CD4-positive, alpha-beta T cell (primary cell): ENCODE measurements at regions of chr16 and their contacts with region 1.

Region 1: DNA sequence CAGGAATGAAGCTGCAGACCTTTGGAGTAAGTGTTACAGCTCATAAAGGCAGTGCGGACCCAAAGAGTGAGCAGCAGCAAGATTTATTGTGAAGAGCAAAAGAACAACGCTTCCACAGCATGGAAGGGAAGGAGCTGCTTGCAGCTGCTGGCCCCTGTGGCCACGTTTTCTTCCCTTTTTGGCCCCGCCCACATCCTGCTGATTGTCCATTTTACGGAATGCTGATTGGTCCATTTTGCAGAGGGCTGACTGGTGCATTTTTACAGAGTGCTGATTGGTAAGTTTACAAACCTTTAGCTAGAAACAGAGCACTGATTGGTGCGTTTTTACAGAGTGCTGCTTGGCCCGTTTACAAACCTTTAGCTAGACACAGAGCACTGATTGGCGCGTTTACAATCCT is 841.5 kb downstream of the CDH11 start:
- DNase-seq: no peak
- ATAC-seq: no peak
- H3K4me3 ChIP-seq: no peak overlapping the region
- H3K4me3 Mint-ChIP-seq: no peak overlapping the region
- H3K27ac ChIP-seq: no peak overlapping the region
- H3K27ac Mint-ChIP-seq: no peak overlapping the region
- H3K4me1 ChIP-seq: no peaks in the 10 kb centered on the region
- H3K4me1 Mint-ChIP-seq: no peaks in the 10 kb centered on the region
- H3K27me3 ChIP-seq: no peaks in the 10 kb centered on the region
- H3K27me3 Mint-ChIP-seq: no peaks in the 10 kb centered on the region
- CTCF ChIP-seq: no peak

Region 2: DNA sequence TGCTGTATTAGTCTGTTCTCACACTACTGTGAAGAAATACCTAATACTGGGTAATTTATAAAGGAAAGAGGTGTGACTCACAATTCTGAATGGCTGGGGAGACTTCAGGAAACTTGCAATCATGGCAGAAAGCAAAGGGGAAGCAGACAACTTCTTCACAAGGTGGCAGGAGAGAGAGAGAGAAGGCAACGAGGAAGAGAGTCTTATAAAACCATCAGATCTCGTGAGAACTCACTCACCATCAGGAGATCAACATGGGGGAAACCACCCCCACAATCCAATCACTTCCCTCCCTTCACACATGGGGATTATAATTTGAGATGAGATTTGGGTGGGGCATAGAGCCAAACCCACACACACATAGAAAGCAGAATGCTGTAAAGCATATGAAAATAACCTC is 54.6 kb before region 1 on chr16:
- CTCF ChIA-PET with region 1: no interaction called
- POLR2A ChIA-PET with region 1: no interaction called
- intact Hi-C with region 1: loop called in 1 of 2 experiments (anchors 10 kb)
- DNase-seq: no peak
- ATAC-seq: no peak
- H3K4me3 ChIP-seq: no peak overlapping the region
- H3K4me3 Mint-ChIP-seq: no peak overlapping the region
- H3K27ac ChIP-seq: no peak overlapping the region
- H3K27ac Mint-ChIP-seq: no peak overlapping the region
- H3K4me1 ChIP-seq: no peaks in the 10 kb centered on the region
- H3K4me1 Mint-ChIP-seq: no peaks in the 10 kb centered on the region
- H3K27me3 ChIP-seq: no peaks in the 10 kb centered on the region
- H3K27me3 Mint-ChIP-seq: no peaks in the 10 kb centered on the region
- CTCF ChIP-seq: no peak

Region 3: GRCh38 chr16:64397945-64398508 is 117.7 kb after region 1 on chr16:
- CTCF ChIA-PET with region 1: no interaction called
- POLR2A ChIA-PET with region 1: no interaction called
- intact Hi-C with region 1: no loop called
- DNase-seq: no peak
- ATAC-seq: no peak
- H3K4me3 ChIP-seq: no peak overlapping the region
- H3K4me3 Mint-ChIP-seq: no peak overlapping the region
- H3K27ac ChIP-seq: no peak overlapping the region
- H3K27ac Mint-ChIP-seq: no peak overlapping the region
- H3K4me1 ChIP-seq: no peaks in the 10 kb centered on the region
- H3K4me1 Mint-ChIP-seq: no peaks in the 10 kb centered on the region
- H3K27me3 ChIP-seq: no peaks in the 10 kb centered on the region
- H3K27me3 Mint-ChIP-seq: no peaks in the 10 kb centered on the region
- CTCF ChIP-seq: no peak